Right ventricle myocardium inferior (tissue), 1 donor: ENCODE measurements at regions of chr11 and their contacts with region 1.

Region 1: GRCh38 chr11:9757809-9758636 is 94.1 kb downstream of the SWAP70 start:
- DNase-seq: peak; percentile 95
- ATAC-seq: peak; percentile 73

Region 2: DNA sequence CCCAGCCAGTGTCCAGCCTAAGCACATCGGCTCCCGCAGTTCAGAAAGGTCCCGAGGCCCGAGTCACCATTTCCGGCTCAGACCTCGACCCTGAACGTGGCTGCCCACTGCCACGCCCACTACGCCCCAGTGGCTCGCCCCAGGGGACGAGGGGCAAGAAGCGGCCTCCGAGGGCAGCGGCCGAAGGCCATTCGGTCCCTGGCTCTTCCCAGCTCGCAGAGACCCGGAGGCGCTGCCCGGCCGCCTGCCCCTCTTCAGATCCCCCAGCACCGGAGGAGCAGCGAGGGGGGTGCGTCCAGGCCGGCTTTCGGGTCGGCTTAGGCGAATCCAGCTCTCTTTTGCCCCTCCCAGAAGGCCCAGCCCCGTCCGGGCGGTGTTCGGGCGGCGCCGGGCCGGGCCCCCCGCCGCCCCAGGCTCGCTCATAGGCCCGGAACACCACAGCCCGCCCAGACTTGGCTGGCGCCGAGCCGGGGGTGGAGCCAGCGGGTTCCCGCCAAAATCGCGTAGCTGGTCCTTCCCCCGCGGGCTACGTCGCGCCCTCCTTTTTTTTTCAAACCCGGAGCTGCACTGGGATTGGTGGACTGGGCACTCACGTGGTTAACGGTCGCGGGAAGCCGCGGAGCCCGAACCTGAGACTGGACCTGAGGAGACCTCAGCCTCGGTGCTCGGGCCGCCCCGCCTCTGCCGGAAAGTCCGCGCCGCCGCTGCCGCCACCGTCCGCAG is 184.8 kb before region 1 on chr11 and contains the start of gene WEE1:
- intact Hi-C with region 1: loop called (anchors 5 kb)
- DNase-seq: peak; percentile 98
- ATAC-seq: peak; percentile 97
- total RNA-seq, gene WEE1: 40.1 TPM

Region 3: DNA sequence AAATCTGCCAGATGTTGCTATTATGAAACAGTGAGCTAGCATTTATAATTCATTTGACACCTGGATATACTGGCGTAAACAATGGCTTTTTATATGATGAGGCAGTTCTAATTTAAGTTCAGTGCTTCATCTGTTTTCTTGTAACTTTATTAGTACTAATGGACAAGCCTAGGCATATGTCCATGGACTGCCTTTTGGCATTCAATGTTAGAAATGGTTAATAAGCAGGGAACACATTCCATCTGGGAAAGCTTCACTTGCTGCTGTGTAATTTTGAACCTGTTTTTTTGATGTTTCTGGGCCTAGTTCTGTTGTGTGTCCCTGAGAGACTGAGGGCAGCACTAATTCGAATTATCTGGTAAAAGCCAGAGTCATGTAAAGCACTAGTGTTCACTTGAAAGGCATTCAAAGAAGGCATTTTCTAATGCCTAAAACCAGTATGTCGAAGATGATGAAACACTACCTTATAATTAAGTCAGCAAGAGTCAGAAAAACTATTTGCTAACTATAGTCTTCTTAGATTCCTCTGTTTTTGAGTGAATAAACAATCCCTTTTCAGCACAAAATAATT is 44.4 kb after region 1 on chr11:
- intact Hi-C with region 1: loop called (anchors 5 kb)
- DNase-seq: no peak
- ATAC-seq: peak; percentile 45

Region 4: DNA sequence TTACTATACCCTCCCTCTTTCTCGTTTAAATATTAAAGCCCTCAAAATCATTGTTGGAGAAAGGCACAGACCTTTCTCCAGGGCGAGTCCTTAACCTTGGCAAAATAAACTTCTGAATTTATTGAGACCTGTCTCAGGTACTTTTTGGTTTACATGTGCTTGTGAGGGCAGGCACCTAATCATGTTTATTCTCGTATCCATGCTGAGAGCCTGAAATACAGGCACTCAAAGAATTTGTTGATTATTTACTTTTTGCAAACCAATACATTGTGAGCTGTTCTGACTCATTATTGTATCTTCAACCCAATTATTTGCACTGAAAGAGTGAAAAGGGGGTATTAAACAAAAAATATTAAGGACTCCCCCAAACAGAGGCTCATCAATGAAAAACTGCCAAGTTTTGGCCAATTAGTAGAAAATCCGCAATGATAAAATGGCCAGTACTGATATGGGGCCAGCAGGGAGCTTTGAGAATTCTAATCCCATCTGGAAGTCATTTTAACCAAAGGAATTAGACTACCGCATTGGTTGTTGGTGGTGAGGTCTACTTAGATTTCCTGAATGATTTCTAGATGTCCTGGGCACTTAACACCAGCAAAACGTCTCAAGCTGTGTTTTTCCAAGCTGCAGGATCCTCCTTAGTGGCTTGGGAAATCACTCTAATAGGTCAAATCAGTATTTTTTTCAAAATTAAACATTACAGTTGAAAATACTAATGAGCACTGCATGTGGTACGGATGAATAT is 63.2 kb after region 1 on chr11:
- intact Hi-C with region 1: loop called (anchors 2 kb)
- DNase-seq: no peak
- ATAC-seq: no peak

Region 5: GRCh38 chr11:9972989-9973388 is 215.0 kb after region 1 on chr11:
- intact Hi-C with region 1: loop called (anchors 1 kb)
- DNase-seq: no peak
- ATAC-seq: peak; percentile 80

Region 6: GRCh38 chr11:10322830-10323792 is 565.1 kb after region 1 on chr11:
- intact Hi-C with region 1: loop called (anchors 1 kb)
- DNase-seq: no peak
- ATAC-seq: peak; percentile 49